T-cell (primary cell): ENCODE measurements at regions of chr20 and their contacts with region 1.

Region 1: DNA sequence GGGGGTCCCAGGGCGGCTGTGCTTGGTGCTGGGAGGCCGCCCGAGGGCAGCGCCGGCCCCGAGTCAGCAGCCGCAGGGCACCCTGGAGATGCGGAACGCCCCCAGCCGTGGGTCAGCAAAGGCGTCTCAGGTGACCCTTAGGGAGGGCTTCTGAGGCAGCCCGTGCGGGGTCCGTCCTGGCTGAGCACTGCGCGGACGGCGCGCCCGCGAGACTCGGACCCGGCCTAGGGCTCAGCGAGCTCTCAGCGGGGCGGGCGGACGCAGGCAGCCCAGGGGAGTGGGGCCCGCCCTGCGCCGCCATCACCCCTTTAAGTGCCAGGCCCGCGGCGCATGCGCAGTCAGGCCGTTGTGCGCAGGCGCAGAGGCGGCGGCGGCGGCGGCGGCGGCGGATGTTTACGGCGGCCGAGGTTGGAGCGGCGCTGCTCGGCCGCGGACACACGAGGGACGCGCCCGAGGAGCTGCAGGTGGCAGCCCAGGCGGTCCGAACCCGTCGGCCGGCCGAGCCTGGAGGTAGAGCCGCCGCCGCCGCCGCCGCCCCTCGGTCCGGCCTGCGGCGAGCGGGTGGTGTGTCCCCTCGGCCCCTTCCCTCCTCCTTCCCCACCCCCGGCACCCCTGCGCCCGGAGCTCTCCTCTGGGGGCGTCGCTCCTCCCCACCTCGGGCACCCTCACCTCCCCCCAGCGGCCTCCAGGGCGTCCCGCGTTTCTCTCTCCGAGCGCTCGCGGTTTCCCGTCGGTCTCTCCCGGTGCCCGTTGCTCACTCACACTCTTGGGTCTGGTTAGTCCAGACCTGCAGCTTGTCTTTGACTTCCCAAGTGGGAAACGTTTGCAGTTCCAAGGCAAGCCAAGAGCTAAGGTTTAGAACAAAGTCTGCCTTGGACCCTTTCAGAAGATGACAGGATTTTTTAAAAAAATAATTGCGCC is at the start of gene PCMTD2:
- DNase-seq: peak; percentile 59 to 93 (median 80)
- ATAC-seq: peak; percentile 86 to 91 (median 88)
- H3K4me3 ChIP-seq: peak within 1 kb of the TSS; percentile 68 to 86
- H3K4me3 Mint-ChIP-seq: peak within 1 kb of the TSS; percentile 90 to 96 (median 95)
- H3K27ac ChIP-seq: peak within 1 kb of the TSS; percentile 56
- H3K27ac Mint-ChIP-seq: peak within 1 kb of the TSS; percentile 92 to 96
- H3K4me1 ChIP-seq: peaks cover 36 to 49% of the 10 kb centered on the region in 2 experiments
- H3K4me1 Mint-ChIP-seq: peaks cover 52 to 57% (median 54%) of the 10 kb centered on the region in 3 donors
- H3K27me3 ChIP-seq: peaks cover 0 to 11% of the 10 kb centered on the region in 2 experiments
- H3K27me3 Mint-ChIP-seq: peaks cover 0 to 1% of the 10 kb centered on the region in 2 donors
- total RNA-seq, gene PCMTD2: 92.0 to 175 (median 160) TPM

Region 2: GRCh38 chr20:64279826-64280459 is 24.3 kb after region 1 on chr20:
- CTCF ChIA-PET with region 1: no interaction called
- POLR2A ChIA-PET with region 1: interaction called in 1 of 2 experiments, 15 read pairs
- DNase-seq: no peak
- ATAC-seq: no peak
- H3K4me3 ChIP-seq: no peak overlapping the region
- H3K4me3 Mint-ChIP-seq: no peak overlapping the region
- H3K27ac ChIP-seq: no peak overlapping the region
- H3K27ac Mint-ChIP-seq: no peak overlapping the region
- H3K4me1 ChIP-seq: peaks cover 0 to 9% of the 10 kb centered on the region in 2 experiments
- H3K4me1 Mint-ChIP-seq: peaks cover 9 to 37% (median 28%) of the 10 kb centered on the region in 3 donors
- H3K27me3 ChIP-seq: no peaks in the 10 kb centered on the region
- H3K27me3 Mint-ChIP-seq: no peaks in the 10 kb centered on the region